ENCODE measurements at regions of chr21 and their contacts with region 1.

Region 1: GRCh38 chr21:33229784-33230544 is at the start of gene IFNAR2:
- DNase-seq: peak; percentile 51 to 86 (median 71)
- ATAC-seq: peak; percentile 85
- H3K4me3 ChIP-seq: peak within 1 kb of the TSS; percentile 87
- H3K4me3 Mint-ChIP-seq: peak within 1 kb of the TSS; percentile 96
- H3K27ac ChIP-seq: peak within 1 kb of the TSS; percentile 60 to 87
- H3K27ac Mint-ChIP-seq: peak within 1 kb of the TSS; percentile 90
- H3K4me1 ChIP-seq: peaks cover 24% of the 10 kb centered on the region
- H3K4me1 Mint-ChIP-seq: peaks cover 48% of the 10 kb centered on the region
- H3K27me3 ChIP-seq: no peaks in the 10 kb centered on the region
- H3K27me3 Mint-ChIP-seq: no peaks in the 10 kb centered on the region
- CTCF ChIP-seq: no peak
- total RNA-seq, gene IFNAR2: 26.6 to 28.2 TPM

Region 2: DNA sequence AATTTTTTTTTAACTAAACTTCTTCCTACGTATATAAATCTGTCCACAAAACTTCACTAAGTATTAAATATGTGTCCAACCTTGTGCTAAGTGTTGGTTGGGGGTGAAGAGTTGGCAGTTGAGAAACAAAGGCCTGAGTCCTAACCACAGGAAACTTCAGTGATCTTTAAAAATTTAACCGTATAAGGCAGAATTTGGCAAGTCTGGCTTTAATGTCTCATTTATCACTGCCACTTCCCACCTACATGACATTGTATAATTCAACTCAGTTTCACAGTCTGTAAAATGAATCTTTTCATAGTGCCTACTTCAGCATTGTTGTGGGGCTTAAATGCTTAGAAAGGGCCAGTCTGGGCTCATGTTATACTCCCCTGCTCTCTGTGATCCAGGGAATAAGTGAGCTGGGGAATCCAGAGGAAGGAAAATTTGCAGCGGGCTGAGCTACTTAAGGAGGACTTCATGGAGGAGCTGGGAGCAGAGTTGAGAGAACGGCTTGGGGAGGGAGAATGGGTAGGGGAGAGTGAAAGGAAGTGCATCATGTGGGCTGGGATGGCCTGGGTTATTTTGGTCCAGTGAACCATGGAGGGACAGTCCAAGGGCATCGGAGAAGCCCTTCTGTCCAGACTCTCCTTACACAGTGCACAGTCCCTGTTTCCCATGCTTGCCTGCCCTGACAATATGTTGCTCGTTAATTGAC is 14.3 kb after region 1 on chr21:
- CTCF ChIA-PET with region 1: interaction called, 3 read pairs
- POLR2A ChIA-PET with region 1: interaction called, 6 read pairs
- intact Hi-C with region 1: loop called in 1 of 2 experiments (anchors 2 kb)
- DNase-seq: peak in 1 of 14 experiments; percentile 46
- ATAC-seq: peak; percentile 30
- H3K4me3 ChIP-seq: peak overlapping the region; percentile 12
- H3K4me3 Mint-ChIP-seq: peak overlapping the region; percentile 77
- H3K27ac ChIP-seq: peak overlapping the region; percentile 8 to 50
- H3K27ac Mint-ChIP-seq: peak overlapping the region; percentile 89
- H3K4me1 ChIP-seq: peaks cover 63% of the 10 kb centered on the region
- H3K4me1 Mint-ChIP-seq: peaks cover 89% of the 10 kb centered on the region
- H3K27me3 ChIP-seq: no peaks in the 10 kb centered on the region
- H3K27me3 Mint-ChIP-seq: no peaks in the 10 kb centered on the region
- CTCF ChIP-seq: no peak

Region 3: DNA sequence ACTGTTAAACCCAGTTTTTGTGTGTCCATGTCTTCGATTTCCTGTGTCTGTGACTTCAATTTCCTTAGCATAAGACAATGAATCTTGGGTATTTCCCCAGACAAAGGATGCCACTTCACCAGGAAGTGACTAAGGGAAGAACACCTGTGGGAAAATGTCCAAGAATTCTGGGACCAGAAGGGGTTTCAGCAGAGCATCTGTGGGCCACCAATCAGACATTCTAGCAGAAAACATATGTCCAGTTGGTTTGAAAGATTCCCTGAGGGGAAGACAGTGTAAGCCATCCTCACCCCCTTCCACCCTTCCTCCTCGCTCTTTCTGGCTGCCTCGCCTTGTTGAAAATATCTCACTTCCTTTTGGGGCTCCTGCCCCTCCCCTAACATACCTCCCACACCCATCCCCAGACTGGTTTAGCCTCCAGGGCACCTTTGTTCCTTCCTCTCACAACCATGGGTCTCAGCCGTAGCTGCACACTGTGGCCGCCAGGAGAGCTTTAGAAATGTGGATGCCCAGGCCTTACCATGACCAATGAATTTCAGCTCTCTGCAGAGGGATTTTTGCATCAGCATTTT is 69.3 kb after region 1 on chr21:
- CTCF ChIA-PET with region 1: no interaction called
- POLR2A ChIA-PET with region 1: interaction called, 3 read pairs
- intact Hi-C with region 1: loop called in 1 of 2 experiments (anchors 10 kb)
- DNase-seq: peak in 13 of 14 experiments; percentile 9 to 76 (median 36)
- ATAC-seq: peak; percentile 97
- H3K4me3 ChIP-seq: peak overlapping the region; percentile 6
- H3K4me3 Mint-ChIP-seq: peak overlapping the region; percentile 66
- H3K27ac ChIP-seq: peak overlapping the region; percentile 23 to 69
- H3K27ac Mint-ChIP-seq: peak overlapping the region; percentile 86
- H3K4me1 ChIP-seq: peaks cover 39% of the 10 kb centered on the region
- H3K4me1 Mint-ChIP-seq: peaks cover 53% of the 10 kb centered on the region
- H3K27me3 ChIP-seq: no peaks in the 10 kb centered on the region
- H3K27me3 Mint-ChIP-seq: no peaks in the 10 kb centered on the region
- CTCF ChIP-seq: no peak